Posterior cingulate gyrus (tissue), 11 donors: ENCODE measurements at regions of chr6 and their contacts with region 1.

Region 1: DNA sequence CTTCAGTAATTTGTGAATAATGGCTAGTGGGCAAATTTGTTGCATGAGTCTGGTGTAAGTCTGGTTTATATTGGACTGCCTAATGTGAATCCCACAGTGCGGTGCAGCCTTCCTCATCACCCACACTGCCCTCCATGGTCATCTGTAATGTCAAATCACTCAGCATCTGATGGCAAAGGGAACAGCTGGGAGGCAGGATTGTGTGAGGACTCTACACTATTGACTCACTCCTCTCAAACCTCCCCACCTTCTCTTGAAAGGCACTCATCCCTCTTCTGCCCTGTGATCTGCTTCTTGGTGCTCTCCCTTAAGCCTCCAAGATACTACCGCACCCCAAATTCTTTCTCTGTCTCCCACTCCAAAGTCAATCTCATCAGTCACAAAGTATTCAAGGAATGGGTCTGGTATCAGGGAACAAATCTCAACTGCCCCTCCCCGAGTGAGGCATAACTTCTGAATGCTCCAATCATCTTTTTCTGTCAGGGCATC is 146.0 kb upstream of the BEND6 start:
- DNase-seq: no peak

Region 2: DNA sequence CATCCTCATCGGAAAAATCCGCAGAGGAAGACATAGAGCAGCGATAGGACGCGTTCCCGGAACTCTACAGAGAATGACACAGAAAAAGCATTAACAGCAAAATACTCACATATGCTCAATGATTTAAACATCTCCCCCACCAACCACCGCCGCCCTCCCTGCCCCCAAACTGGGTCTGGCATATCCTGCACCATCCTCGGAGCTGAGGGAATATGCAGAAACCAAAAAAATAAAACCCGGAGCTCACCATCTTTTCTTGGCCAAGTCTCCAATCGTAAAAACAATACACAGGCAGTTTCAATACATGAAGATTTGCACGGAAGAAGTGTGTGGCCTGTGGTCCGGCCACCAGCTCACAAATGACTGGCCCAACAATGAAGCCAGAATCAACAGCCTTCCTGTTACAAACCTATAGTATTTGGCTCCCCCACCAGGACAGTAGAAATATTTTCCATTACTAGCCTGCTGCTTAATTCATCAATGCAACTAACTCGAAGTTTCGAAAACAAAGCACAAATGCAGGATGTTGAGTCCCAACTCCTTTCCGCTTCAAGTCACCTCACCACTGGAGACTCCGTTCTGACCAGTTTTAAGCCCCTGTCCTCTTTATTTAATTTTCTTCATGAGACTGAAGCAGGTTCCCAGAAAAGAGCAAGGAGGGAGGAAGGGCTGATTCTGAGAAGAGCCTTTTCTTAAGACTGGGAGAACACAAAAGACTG is 42.8 kb after region 1 on chr6:
- intact Hi-C with region 1: loop called (anchors 10 kb)
- DNase-seq: peak in 8 of 10 donors; percentile 13 to 87 (median 44)